ENCODE measurements at regions of chr19 and their contacts with region 1.

Region 1: DNA sequence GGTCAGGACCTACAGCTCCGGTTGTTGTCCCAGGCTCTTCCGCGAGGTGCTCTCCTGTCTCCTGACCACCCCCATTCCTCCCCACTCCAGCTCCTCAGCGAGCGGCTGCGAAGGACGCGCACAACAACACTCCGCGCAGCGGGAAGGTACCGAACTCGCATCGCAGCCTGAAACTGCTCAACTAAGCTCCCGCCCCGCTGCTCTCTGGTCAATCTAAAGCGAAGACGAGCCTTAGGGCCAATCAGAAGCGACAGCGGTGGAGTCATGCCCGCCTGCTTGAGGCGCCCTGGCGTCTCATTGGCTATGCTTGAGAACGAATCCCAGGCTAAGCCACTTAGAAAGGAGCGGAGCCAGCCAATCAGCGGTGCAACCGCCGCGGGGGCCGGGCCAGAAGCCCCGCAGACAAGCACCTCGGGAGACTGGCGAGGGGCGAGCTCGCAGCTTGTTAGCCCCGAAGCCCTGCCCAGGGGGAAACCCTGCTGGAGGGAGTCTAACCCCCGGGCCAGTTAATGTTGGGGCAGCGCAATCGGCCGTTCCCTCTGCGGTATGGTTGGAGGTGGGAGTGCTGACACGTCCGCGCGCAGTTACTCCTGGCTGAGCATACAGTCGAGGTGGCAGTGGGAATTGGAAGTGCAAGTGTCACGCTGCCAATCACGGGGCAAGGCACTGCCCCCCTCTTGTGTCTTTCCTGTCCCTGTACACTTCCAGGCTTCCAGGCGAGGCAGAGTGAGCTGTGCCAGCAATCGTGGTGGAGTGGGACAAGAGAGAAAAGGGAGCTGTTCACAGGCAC is 1.9 kb upstream of the ZBTB32 start:
- DNase-seq: peak; percentile 94 to 98
- H3K4me3 ChIP-seq: peak overlapping the region; percentile 64 to 65
- H3K27ac ChIP-seq: no peak overlapping the region
- H3K4me1 ChIP-seq: peaks cover 2 to 3% of the 10 kb centered on the region in 2 donors
- H3K27me3 ChIP-seq: no peaks in the 10 kb centered on the region
- CTCF ChIP-seq: no peak

Region 2: DNA sequence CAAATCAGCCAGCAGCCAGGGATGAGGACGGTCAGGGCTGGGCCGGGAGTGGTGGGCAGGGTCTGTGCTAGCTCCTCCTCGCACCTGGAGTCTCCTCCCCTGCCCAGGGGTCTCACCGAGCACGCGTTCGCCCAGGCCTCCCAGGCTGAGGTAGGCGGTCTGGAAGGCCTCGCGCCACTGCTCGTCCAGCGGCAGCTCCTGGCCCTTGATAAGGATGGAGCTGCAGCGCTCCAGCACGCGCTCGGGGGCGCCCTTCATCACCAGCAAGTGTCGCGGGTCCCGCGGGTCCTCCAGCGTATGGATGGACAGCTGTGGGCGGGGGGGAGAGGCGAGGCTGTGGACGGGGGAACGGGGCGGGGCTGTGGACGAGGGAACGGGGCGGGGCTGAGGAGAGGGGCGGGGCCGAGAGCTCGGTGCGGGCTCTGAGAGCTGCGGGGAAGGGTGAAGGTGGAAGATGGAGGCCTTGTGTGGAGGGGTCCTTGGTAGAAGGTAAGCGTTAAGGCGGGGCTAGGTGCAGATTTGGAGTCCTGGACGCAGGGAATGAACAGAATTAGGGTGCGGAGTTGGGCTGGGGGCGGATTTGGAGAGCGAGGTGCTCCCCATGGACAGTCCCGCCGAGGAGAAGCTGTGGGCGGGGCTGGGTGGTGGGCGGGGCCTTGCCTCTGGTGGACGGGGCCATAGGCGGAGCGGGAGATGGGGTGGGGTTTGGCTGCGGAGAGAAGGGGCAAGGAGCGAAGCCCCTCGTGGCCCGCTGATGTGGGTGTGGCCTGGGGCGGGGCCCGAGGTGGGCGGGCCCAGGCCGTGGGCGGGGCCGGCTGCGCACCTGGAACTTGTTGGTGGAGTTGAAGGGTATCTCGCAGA is 144.6 kb before region 1 on chr19:
- intact Hi-C with region 1: no loop called
- DNase-seq: no peak
- H3K4me3 ChIP-seq: peak overlapping the region; percentile 41 to 42
- H3K27ac ChIP-seq: no peak overlapping the region
- H3K4me1 ChIP-seq: peaks cover 0 to 6% of the 10 kb centered on the region in 2 donors
- H3K27me3 ChIP-seq: peaks cover 9% of the 10 kb centered on the region
- CTCF ChIP-seq: no peak

Region 3: DNA sequence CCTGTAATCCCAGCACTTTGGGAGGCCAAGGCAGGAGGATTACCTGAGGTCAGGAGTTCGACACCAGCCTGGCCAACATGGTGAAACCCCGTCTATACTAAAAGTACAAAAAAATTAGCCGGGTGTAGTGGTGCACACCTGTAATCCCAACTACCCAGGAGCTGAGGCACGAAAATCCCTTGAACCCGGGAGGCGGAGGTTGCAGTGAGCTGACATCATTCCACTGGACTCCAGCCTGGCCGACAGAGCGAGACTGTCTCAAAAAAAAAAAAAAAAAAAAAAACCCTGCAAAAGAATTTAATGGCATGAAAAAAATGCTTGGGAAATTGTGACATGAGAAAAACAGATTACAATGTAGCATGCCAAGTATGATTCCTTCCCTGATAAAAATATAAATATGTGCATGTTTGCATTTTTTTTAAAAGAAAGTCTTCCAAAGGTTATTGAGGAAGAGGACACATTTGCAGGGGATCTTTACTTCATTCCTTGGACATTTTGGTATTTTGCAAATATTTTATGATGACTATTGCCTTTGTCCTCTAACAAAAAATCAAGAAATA is 12.7 kb before region 1 on chr19:
- intact Hi-C with region 1: no loop called
- DNase-seq: no peak
- H3K4me3 ChIP-seq: no peak overlapping the region
- H3K27ac ChIP-seq: no peak overlapping the region
- H3K4me1 ChIP-seq: no peaks in the 10 kb centered on the region
- H3K27me3 ChIP-seq: no peaks in the 10 kb centered on the region
- CTCF ChIP-seq: no peak

Region 4: GRCh38 chr19:35740423-35741202 is 38.2 kb after region 1 on chr19:
- intact Hi-C with region 1: loop called (anchors 1 kb)
- DNase-seq: peak; percentile 94 to 99
- H3K4me3 ChIP-seq: peak overlapping the region; percentile 56 to 70
- H3K27ac ChIP-seq: peak overlapping the region; percentile 81 to 85
- H3K4me1 ChIP-seq: peaks cover 10 to 18% of the 10 kb centered on the region in 2 donors
- H3K27me3 ChIP-seq: no peaks in the 10 kb centered on the region
- CTCF ChIP-seq: peak; percentile 12 to 22 (median 18)

Region 5: DNA sequence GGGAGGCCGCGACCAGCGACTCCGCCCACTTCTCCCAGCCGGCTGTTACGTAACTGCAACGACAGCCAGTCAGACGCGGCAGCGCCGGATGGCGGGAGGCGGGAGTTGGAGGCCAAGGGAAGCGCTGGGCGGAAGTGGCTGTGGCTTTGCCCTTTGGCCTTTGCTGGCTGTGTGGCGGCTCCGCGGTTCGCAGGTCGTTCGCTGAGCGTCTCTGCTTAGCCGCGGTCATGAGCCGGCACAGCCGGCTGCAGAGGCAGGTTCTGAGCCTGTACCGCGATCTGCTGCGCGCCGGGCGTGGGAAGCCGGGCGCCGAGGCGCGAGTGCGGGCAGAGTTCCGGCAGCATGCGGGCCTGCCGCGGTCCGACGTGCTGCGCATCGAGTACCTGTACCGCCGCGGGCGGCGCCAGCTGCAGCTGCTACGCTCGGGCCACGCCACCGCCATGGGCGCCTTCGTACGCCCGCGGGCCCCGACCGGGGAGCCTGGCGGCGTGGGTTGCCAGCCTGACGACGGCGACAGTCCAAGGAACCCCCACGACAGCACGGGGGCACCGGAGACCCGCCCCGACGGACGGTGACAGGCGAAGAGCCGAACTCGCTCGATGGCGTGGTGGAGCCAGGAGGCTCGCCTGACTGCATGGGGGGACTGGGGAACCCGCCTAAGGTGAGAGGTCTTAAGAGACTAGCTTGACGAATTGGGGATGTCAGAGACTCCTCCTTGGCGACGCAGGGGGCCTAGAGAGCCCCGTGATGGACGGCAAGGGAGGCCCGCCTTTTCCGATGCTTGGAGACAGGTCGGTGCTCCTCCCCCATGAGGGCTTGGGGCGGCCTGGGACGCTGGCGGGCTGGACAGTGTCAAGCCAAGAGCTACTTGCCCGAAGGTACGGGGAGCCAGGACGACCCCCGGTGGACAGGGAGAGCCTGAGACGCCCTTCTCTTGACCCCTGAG is 292.9 kb after region 1 on chr19 and contains the start of gene SDHAF1:
- intact Hi-C with region 1: no loop called
- DNase-seq: peak; percentile 85 to 98
- H3K4me3 ChIP-seq: peak within 1 kb of the TSS; percentile 82 to 87
- H3K27ac ChIP-seq: peak within 1 kb of the TSS; percentile 73 to 74
- H3K4me1 ChIP-seq: peaks cover 3 to 14% of the 10 kb centered on the region in 2 donors
- H3K27me3 ChIP-seq: no peaks in the 10 kb centered on the region
- CTCF ChIP-seq: no peak
- total RNA-seq, gene SDHAF1: 107 TPM

Region 6: DNA sequence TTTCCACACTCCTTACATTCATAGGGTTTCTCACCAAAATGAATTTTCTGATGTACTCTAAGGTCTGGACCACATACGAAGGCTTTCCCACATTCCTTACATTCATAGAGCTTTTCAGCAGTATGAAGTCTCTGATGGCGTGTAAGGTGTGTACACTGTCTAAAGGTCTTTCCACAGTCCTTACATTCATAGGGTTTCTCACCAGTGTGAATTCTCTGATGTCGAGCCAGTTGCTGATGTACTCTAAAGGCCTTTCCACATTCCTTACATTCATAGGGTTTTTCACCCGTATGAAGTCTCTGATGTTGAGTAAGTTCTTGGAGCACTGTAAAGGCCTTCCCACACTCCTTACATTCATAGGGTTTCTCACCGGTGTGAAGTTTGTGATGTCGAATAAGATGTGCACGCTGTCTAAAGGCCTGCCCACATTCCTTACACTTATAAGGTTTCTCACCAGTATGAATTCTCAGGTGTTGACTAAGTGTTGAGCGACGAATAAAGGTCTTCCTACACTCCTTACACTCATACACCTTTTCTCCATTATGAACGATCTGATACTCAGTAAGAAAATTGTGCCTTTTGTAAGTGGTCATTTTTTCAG is 638.5 kb after region 1 on chr19:
- intact Hi-C with region 1: no loop called
- DNase-seq: no peak
- H3K4me3 ChIP-seq: no peak overlapping the region
- H3K27ac ChIP-seq: no peak overlapping the region
- H3K4me1 ChIP-seq: no peaks in the 10 kb centered on the region
- H3K27me3 ChIP-seq: no peaks in the 10 kb centered on the region
- CTCF ChIP-seq: no peak

Measured in ascending aorta (tissue), 2 donors.